ENCODE measurements at regions of chr16 and their contacts with region 1.

Region 1: GRCh38 chr16:19912455-19913339 is 28.0 kb upstream of the GPRC5B start:
- DNase-seq: no peak
- ATAC-seq: no peak

Region 2: DNA sequence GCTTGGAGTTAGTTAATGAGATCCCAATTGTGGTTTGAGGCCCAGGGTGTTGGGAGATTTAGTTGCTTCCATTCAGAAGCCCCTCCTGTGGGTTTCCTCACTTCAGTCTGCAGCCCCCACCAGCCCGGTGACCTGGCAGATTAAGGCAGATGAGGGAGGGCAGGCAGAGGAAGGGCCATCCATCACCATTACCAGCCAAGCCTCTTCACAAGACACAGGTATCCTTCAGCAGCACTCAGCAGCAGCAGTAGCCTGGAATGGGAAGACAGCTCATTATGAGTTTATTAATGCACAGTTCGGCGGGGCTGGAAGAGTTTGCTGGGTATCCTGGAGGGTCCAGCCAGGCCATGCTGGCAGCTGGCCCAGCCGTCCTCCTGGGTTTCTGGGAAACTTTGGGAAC is 61.9 kb after region 1 on chr16:
- intact Hi-C with region 1: loop called in 1 of 2 experiments (anchors 10 kb)
- DNase-seq: no peak
- ATAC-seq: no peak